Activated B cell treated with CpG ODN at 0.5 μM for 24 hours (primary cell): ENCODE measurements at regions of chr17 and their contacts with region 1.

Region 1: GRCh38 chr17:41322094-41322902 is 6.8 kb upstream of the KRTAP17-1 start:
- DNase-seq: no peak
- ATAC-seq: peak; percentile 67
- H3K4me3 Mint-ChIP-seq: no peak overlapping the region
- H3K27ac Mint-ChIP-seq: no peak overlapping the region
- H3K4me1 Mint-ChIP-seq: no peaks in the 10 kb centered on the region
- H3K27me3 Mint-ChIP-seq: no peaks in the 10 kb centered on the region
- CTCF ChIP-seq: no peak

Region 2: DNA sequence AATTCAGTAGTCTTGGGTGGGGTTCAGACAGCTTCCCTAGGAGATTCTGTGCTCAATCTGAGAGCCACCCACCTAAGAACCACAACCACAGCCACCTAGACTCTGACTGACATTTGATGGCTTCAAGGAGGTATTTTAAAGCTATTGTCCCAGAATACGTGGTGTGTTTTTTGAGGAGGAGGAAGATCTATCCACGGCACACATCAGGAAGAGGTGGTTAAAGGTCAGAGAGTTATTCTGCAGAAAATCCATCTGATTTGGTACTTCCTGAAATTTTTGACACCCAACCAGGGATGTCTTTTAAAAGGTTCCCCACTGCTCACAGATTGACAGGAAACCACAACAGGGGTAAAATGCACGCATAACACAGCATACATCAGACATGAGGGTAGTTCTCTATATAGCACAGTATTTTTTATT is 699.8 kb before region 1 on chr17:
- CTCF ChIA-PET with region 1: interaction called, 4 read pairs
- POLR2A ChIA-PET with region 1: no interaction called
- intact Hi-C with region 1: loop called (anchors 5 kb)
- DNase-seq: no peak
- ATAC-seq: no peak
- H3K4me3 Mint-ChIP-seq: peak overlapping the region; percentile 53
- H3K27ac Mint-ChIP-seq: peak overlapping the region; percentile 67
- H3K4me1 Mint-ChIP-seq: peaks cover 71% of the 10 kb centered on the region
- H3K27me3 Mint-ChIP-seq: no peaks in the 10 kb centered on the region
- CTCF ChIP-seq: no peak

Region 3: GRCh38 chr17:41121742-41122141 is 200.6 kb before region 1 on chr17:
- CTCF ChIA-PET with region 1: interaction called, 3 read pairs
- POLR2A ChIA-PET with region 1: interaction called, 3 read pairs
- intact Hi-C with region 1: loop called (anchors 5 kb)
- DNase-seq: no peak
- ATAC-seq: no peak
- H3K4me3 Mint-ChIP-seq: no peak overlapping the region
- H3K27ac Mint-ChIP-seq: no peak overlapping the region
- H3K4me1 Mint-ChIP-seq: peaks cover 43% of the 10 kb centered on the region
- H3K27me3 Mint-ChIP-seq: peaks cover 7% of the 10 kb centered on the region
- CTCF ChIP-seq: no peak

Region 4: GRCh38 chr17:41474863-41475262 is 152.6 kb after region 1 on chr17:
- CTCF ChIA-PET with region 1: no interaction called
- POLR2A ChIA-PET with region 1: no interaction called
- intact Hi-C with region 1: no loop called
- DNase-seq: no peak
- ATAC-seq: no peak
- H3K4me3 Mint-ChIP-seq: no peak overlapping the region
- H3K27ac Mint-ChIP-seq: no peak overlapping the region
- H3K4me1 Mint-ChIP-seq: peaks cover 2% of the 10 kb centered on the region
- H3K27me3 Mint-ChIP-seq: peaks cover 6% of the 10 kb centered on the region
- CTCF ChIP-seq: no peak